Activated CD8-positive, alpha-beta T cell treated with anti-CD3 and anti-CD28 coated beads for 36 hours (primary cell): ENCODE measurements at regions of chr10 and their contacts with region 1.

Region 1: GRCh38 chr10:62244780-62245467 is 23.7 kb downstream of the RTKN2 start:
- DNase-seq: peak; percentile 65
- ATAC-seq: peak; percentile 82
- H3K4me3 Mint-ChIP-seq: no peak overlapping the region
- H3K27ac Mint-ChIP-seq: peak overlapping the region; percentile 74
- H3K4me1 Mint-ChIP-seq: peaks cover 33% of the 10 kb centered on the region
- H3K27me3 Mint-ChIP-seq: no peaks in the 10 kb centered on the region
- CTCF ChIP-seq: peak; percentile 87

Region 2: DNA sequence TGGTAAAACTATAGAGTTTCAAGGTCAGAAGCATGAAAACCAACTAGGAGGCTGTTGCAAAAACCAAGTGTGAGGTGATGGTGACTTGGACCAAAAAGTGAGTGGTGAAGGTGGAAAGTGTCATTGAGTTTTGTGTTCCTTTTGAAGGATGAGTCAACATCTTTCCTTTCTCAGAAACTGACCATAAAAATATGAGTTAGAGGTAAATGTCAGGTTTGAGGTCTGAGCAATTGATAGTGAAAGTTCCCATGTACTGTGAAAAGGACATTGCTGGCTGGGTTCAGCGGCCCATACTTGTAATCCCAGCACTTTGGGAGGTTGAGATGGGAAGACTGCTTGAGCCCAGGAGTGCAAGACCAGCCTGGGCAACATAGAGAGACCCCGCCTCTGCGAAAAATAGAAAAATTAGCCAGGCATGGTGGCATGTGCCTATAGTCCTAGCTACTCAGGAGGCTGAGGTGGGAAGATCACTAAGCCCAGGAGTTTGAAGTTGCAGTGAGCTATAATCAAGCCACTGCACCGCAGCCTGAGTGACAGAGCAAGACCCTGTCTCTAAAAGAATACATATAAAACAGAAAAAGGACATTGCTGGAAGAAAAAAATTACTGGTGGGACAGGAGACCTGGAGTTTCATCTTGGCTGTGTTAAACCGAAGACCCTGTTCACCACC is 432.7 kb before region 1 on chr10:
- CTCF ChIA-PET with region 1: no interaction called
- POLR2A ChIA-PET with region 1: no interaction called
- intact Hi-C with region 1: no loop called
- DNase-seq: peak; percentile 4
- ATAC-seq: peak; percentile 66
- H3K4me3 Mint-ChIP-seq: no peak overlapping the region
- H3K27ac Mint-ChIP-seq: no peak overlapping the region
- H3K4me1 Mint-ChIP-seq: peaks cover 3% of the 10 kb centered on the region
- H3K27me3 Mint-ChIP-seq: peaks cover 10% of the 10 kb centered on the region
- CTCF ChIP-seq: no peak

Region 3: GRCh38 chr10:62038609-62039190 is 206.2 kb before region 1 on chr10:
- CTCF ChIA-PET with region 1: interaction called, 106 read pairs
- POLR2A ChIA-PET with region 1: interaction called, 6 read pairs
- intact Hi-C with region 1: loop called (anchors 2 kb)
- DNase-seq: peak; percentile 87
- ATAC-seq: peak; percentile 75
- H3K4me3 Mint-ChIP-seq: peak overlapping the region; percentile 1
- H3K27ac Mint-ChIP-seq: peak overlapping the region; percentile 82
- H3K4me1 Mint-ChIP-seq: peaks cover 62% of the 10 kb centered on the region
- H3K27me3 Mint-ChIP-seq: no peaks in the 10 kb centered on the region
- CTCF ChIP-seq: peak; percentile 81

Region 4: DNA sequence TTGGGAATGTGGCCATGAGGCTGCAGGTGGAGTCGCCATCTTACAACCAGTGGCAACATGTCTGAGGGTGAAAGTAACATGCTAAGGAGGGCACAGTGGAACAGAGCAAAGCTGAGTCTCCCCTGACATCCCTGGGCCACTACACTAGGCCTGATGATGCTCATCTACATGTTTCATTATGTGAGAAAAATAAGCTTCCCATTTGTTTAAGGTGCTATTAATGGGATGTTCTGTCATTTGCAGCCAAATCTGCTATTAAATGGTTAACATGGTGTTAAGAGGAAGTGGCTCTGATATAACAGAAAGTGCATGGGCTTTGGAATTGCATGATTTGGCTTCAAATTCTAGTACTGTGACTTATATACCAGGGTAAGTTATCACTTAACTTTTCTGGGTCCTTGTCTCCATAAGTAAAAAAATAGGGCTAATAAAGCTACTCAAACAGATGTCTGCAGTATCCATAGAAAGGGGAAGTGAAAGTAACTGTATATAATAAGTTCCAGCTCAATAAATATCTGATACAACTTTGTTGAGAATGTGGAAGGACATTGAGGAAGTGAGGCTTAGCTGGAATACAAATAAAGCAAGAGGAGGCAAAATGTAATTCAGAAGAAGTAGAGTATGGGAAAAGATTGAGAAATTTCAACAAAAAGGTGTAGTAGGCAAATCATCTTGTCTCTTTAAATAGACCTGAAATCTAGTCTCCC is 135.2 kb before region 1 on chr10:
- CTCF ChIA-PET with region 1: interaction called, 18 read pairs
- POLR2A ChIA-PET with region 1: no interaction called
- intact Hi-C with region 1: no loop called
- DNase-seq: no peak
- ATAC-seq: no peak
- H3K4me3 Mint-ChIP-seq: no peak overlapping the region
- H3K27ac Mint-ChIP-seq: no peak overlapping the region
- H3K4me1 Mint-ChIP-seq: peaks cover 38% of the 10 kb centered on the region
- H3K27me3 Mint-ChIP-seq: no peaks in the 10 kb centered on the region
- CTCF ChIP-seq: no peak

Region 5: DNA sequence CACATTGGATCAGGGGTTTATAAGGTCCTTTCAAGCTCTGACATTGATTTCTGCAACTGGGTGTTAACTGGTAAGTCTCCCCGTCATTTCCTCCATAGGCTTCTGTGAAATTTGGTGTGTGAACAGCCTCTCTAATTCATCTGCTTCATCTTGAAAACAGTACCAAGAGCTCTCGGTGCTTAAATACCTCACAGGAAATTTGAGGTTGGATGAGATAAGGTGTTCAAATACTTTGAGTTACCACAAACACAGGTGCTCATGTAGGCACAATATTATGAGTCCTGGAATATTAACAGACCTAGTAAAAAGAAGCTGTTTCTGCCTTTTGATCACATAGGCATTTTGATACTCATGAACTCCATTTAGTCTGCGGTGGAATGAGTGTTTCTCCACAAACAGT is 61.5 kb before region 1 on chr10:
- CTCF ChIA-PET with region 1: interaction called, 46 read pairs
- POLR2A ChIA-PET with region 1: interaction called, 6 read pairs
- intact Hi-C with region 1: loop called (anchors 5 kb)
- DNase-seq: peak; percentile 63
- ATAC-seq: peak; percentile 64
- H3K4me3 Mint-ChIP-seq: peak overlapping the region; percentile 17
- H3K27ac Mint-ChIP-seq: peak overlapping the region; percentile 99
- H3K4me1 Mint-ChIP-seq: peaks cover 82% of the 10 kb centered on the region
- H3K27me3 Mint-ChIP-seq: no peaks in the 10 kb centered on the region
- CTCF ChIP-seq: no peak

Region 6: GRCh38 chr10:62268399-62269114 is 23.6 kb after region 1 on chr10 and contains the start of gene RTKN2:
- CTCF ChIA-PET with region 1: interaction called, 27 read pairs
- POLR2A ChIA-PET with region 1: interaction called, 3 read pairs
- intact Hi-C with region 1: no loop called
- DNase-seq: peak; percentile 72
- ATAC-seq: peak; percentile 91
- H3K4me3 Mint-ChIP-seq: peak within 1 kb of the TSS; percentile 71
- H3K27ac Mint-ChIP-seq: no peak within 1 kb of the TSS
- H3K4me1 Mint-ChIP-seq: peaks cover 8% of the 10 kb centered on the region
- H3K27me3 Mint-ChIP-seq: peaks cover 30% of the 10 kb centered on the region
- CTCF ChIP-seq: no peak
- total RNA-seq, gene RTKN2: 1.1 to 1.4 TPM

Region 7: GRCh38 chr10:62779487-62780248 is 534.7 kb after region 1 on chr10:
- CTCF ChIA-PET with region 1: no interaction called
- POLR2A ChIA-PET with region 1: no interaction called
- intact Hi-C with region 1: no loop called
- DNase-seq: peak; percentile 98
- ATAC-seq: peak; percentile 94
- H3K4me3 Mint-ChIP-seq: no peak overlapping the region
- H3K27ac Mint-ChIP-seq: peak overlapping the region; percentile 80
- H3K4me1 Mint-ChIP-seq: peaks cover 44% of the 10 kb centered on the region
- H3K27me3 Mint-ChIP-seq: no peaks in the 10 kb centered on the region
- CTCF ChIP-seq: no peak